Right cardiac atrium (tissue), 5 donors: ENCODE measurements at regions of chr6 and their contacts with region 1.

Region 1: DNA sequence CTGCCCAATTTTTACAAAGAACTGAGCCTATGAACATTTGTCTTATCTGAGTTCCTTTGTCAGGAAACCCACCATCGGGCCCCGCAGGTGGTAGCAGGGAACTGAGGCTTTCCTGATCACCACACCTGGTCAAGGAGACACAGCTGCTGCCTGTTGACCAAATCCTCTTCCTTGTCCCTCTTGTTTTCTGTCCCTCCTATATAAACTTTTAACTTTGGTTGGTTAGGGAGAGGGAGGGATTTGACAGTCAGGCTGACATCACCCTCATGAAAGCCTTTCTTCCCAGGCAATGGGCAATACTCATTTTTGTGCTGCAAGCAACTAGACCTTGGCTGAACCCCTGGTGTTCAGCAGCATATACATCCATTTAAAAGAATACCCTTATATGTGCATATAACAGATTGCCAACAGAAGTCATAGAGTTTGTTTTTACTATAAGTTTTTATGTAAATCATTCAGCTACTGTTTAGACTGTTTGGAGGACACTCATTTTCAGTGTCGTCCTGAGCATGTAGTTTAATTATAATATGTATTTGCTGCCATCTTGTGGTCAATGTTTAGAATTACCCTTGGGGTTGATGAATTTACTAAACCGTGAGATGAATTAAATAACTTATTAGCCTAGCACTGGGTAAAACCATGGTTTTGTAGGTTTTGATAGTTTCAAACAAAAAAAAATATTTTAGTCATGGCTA is 17.0 kb downstream of the CRISP1 start:
- DNase-seq: no peak
- ATAC-seq: peak; percentile 16 to 46
- H3K4me3 ChIP-seq: no peak overlapping the region
- H3K27ac ChIP-seq: no peak overlapping the region
- H3K4me1 ChIP-seq: no peaks in the 10 kb centered on the region
- H3K27me3 ChIP-seq: no peaks in the 10 kb centered on the region

Region 2: DNA sequence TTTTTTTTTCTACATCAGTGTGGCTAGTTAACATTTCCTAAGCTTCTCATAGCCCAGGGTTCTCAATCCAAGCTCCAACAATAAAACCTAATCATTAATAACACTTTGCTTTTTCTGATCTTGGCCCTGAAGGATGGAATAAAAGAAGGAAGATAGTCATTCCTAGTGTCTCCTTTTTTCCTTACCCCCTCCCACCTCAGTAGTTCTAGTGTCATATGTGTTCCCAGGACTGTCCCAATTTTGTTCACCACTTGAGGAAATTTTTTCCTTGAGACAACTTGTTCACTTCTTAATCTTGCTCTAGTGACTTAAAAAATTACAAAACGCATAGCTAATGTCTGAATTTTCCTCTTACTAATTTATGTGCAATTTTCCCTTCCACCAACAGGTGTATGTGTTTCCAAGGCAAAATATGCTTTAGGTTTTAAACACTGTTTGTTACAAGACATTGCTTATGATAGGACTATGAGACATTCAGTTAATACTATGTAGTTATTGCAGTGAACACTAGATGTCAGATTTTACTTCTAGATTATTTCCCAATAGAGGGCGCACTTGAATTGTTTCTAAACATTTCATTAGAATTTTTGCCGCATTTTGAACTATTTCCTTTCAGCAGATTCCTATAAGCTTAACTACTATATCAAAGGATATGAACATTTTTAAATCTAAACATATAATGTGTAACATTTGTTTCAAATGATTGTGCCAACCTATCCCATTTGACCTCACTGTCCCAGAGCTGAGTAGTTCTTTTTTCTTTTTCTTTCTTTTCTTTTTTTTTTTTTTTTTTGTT is 317.4 kb before region 1 on chr6:
- intact Hi-C with region 1: loop called in 2 of 4 experiments (anchors 5 to 10 kb)
- DNase-seq: no peak
- ATAC-seq: peak; percentile 62 to 69
- H3K4me3 ChIP-seq: no peak overlapping the region
- H3K27ac ChIP-seq: no peak overlapping the region
- H3K4me1 ChIP-seq: no peaks in the 10 kb centered on the region
- H3K27me3 ChIP-seq: no peaks in the 10 kb centered on the region

Region 3: GRCh38 chr6:49625140-49625539 is 224.2 kb before region 1 on chr6:
- intact Hi-C with region 1: loop called in 3 of 4 experiments (anchors 5 to 10 kb)
- DNase-seq: no peak
- ATAC-seq: no peak
- H3K4me3 ChIP-seq: no peak overlapping the region
- H3K27ac ChIP-seq: no peak overlapping the region
- H3K4me1 ChIP-seq: no peaks in the 10 kb centered on the region
- H3K27me3 ChIP-seq: no peaks in the 10 kb centered on the region

Region 4: DNA sequence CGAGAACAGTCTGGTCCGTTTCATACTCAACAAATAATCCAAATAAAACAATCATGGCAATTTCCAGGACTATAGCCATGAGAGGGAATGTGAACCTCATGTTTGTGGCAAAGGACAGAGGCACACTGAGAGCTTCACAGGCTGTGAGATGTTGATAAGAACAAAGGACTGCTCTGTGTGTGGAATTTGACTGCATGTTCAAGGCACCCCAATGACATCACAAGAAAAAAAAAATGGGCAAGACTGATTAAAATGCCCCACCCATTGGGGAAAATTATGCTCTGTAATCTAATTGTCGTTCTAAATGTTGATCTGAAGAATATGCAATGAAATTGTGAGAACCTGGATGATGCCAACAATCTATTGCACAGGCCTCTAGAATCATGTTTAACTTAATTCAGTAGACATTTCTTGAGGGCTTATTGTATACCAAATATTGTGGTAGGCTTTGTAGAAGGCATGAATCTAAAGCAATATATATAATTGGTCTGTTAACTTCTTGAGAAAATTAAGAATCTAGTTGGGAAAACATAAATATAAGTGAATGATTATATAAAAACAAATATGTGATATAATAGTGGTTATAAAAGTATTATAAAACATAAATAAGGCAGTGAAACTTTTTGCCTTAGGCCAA is 212.5 kb before region 1 on chr6 and contains the start of gene RHAG:
- intact Hi-C with region 1: loop called in 1 of 4 experiments (anchors 10 kb)
- DNase-seq: no peak
- ATAC-seq: no peak
- H3K4me3 ChIP-seq: no peak within 1 kb of the TSS
- H3K27ac ChIP-seq: no peak within 1 kb of the TSS
- H3K4me1 ChIP-seq: no peaks in the 10 kb centered on the region
- H3K27me3 ChIP-seq: no peaks in the 10 kb centered on the region
- total RNA-seq, gene RHAG: 1.3 to 2.3 (median 1.5) TPM